ENCODE measurements at regions of chr19 and their contacts with region 1.

Region 1: DNA sequence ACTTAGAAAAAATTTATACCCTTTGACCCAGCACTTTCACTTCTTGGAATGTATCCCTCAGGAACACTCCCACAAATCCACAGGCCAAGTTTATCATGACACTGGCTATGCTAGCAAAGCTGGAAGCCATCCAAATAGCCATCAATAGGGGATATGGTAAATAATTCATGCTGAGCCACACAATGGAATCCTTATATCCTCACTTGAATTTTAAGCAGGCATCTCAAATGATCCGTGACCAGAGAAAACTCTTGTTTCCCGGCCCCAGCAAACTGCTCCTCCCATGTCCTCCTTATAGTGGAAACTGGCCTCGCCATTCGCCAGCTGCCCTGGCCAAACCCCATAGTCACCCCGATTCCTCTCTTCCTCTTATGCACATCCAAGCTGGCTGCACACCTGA is 37.6 kb downstream of the GRIK5 start:
- DNase-seq: no peak
- H3K4me3 ChIP-seq: no peak overlapping the region
- H3K27ac ChIP-seq: no peak overlapping the region
- H3K4me1 ChIP-seq: no peaks in the 10 kb centered on the region
- H3K27me3 ChIP-seq: peaks cover 3% of the 10 kb centered on the region
- CTCF ChIP-seq: no peak

Region 2: GRCh38 chr19:41872775-41873647 is 159.4 kb before region 1 on chr19:
- CTCF ChIA-PET with region 1: no interaction called
- dilution Hi-C with region 1: no loop called
- in situ Hi-C with region 1: no loop called
- intact Hi-C with region 1: loop called (anchors 10 kb)
- DNase-seq: peak; percentile 77
- H3K4me3 ChIP-seq: no peak overlapping the region
- H3K27ac ChIP-seq: no peak overlapping the region
- H3K4me1 ChIP-seq: no peaks in the 10 kb centered on the region
- H3K27me3 ChIP-seq: no peaks in the 10 kb centered on the region
- CTCF ChIP-seq: peak; percentile 79 to 83

Region 3: DNA sequence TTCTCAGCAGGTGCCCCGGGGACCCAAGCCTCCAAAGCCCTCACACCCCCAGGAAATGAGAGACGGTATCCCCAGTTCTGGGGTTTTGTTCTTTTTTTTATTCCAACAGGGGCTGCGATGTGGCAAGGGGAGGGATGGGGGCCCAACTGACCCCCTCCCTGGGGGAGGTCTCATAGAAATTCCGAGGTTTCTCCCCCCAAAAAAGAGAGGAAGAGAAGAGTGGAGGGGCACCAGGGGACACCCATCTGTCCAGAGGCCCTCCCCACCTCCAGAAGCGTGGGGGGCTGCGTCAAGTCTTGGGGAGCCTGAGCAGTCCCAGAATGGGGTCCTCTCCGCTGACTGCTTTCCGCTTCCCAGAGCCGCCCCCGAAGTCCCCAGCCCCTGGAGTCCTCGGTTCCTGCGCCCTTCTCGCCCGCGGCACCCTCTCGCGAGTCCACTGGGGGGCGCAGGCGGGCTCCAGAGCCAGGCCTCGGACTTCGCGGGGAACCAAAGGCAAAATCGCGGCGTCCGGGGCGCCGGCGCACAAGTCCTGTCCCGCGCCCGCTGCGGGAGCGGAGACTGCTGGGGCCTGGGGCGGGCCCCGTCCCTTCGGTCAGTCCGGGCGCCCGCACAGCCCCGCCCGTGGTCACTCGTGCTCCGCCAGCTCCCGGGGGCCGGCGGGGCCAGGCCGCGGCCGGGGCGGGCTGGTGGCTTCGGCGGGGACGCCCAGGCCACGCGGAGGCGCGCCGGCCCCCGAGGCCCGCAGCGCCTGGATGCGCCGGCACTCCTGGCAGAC is 34.0 kb before region 1 on chr19:
- CTCF ChIA-PET with region 1: no interaction called
- dilution Hi-C with region 1: no loop called
- in situ Hi-C with region 1: no loop called
- intact Hi-C with region 1: loop called (anchors 1 kb)
- DNase-seq: no peak
- H3K4me3 ChIP-seq: no peak overlapping the region
- H3K27ac ChIP-seq: no peak overlapping the region
- H3K4me1 ChIP-seq: peaks cover 6% of the 10 kb centered on the region
- H3K27me3 ChIP-seq: peaks cover 11% of the 10 kb centered on the region
- CTCF ChIP-seq: peak; percentile 38 to 71

Region 4: DNA sequence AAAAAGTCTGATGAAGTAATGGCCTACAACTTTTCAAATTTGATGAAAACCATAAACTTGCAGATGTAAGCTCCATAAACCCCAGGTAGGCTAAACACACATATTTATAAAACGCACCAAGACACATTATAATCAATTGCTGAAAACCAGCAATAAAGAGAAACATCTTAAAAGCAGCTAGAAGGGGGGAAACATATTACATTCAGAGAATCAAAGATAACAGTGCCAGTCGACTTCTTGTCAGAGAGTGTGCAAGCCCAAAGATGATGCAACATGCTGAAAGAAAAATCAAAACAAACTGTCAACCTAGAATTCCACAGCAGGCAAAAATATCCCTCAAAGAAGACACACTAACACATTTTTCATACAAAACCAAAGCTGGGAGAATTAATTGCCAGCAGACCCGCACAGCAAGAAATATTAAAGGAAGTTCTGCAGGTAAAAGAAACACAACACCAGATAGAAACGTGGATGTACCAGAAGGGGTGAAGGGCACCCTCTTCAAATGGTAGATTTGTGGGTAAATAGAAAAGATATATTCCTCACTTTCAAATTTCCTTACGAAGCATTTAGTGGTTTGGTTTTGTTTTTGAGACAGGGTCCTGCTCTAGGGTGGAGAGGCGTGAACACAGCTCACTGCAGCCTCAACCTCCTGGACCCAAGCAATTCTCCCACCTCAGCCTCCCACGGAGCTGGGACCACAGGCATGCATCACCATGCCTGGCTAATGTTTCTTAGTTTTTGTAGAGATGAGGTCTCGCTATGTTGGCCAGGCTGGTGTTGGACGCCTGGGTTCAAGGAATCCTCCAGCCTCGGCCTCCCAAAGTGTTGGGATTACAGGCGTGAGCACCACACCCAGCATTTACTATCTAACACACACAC is 21.9 kb before region 1 on chr19:
- CTCF ChIA-PET with region 1: interaction called, 11 read pairs
- dilution Hi-C with region 1: no loop called
- in situ Hi-C with region 1: no loop called
- intact Hi-C with region 1: no loop called
- DNase-seq: no peak
- H3K4me3 ChIP-seq: no peak overlapping the region
- H3K27ac ChIP-seq: no peak overlapping the region
- H3K4me1 ChIP-seq: no peaks in the 10 kb centered on the region
- H3K27me3 ChIP-seq: no peaks in the 10 kb centered on the region
- CTCF ChIP-seq: no peak

Region 5: DNA sequence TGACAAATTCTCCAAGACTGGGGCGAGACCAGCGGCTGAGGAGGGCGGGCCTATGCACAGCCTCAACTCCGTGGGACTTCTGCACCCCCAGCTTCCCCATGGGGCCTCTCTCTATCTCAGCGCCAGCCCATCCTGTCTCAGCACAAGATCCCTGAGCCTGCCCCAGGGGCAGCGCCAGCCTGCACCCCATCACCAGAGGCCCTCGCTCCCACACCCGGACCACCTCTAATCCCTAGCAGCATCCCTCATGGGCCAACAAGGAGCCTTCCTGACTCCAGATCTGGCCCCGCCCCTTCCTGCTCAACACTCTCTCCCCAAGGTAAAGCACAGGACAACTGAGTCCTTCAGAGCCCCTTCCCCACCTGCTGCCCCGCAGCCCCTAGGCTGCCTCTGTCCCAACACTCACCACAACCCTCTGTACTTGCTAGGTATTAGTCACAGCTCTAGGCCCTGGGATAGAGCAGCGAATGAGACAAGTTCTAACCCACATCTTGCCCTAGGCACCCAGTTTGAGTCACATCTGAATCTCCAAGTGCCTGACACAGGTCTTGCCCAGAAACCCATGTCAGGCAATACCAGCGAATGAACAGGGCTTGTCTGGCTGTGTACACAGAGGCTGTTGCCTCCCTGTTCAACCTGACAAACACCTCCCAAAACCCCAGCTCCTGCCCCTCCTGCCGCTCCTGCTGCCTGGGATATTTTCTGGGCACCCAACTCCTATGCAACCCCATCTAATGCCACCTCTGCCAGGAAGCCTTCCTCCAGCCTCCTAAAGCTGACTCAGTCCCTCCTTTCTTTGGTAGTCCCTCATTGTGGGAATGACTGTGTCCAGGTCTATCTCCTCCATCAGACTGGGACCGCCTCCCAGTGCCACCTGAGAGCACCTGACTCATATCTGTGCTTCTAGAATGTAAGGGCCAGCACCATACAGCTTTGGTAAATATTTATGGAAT is 19.0 kb after region 1 on chr19:
- CTCF ChIA-PET with region 1: interaction called, 13 read pairs
- dilution Hi-C with region 1: no loop called
- in situ Hi-C with region 1: no loop called
- intact Hi-C with region 1: no loop called
- DNase-seq: peak; percentile 99
- H3K4me3 ChIP-seq: no peak overlapping the region
- H3K27ac ChIP-seq: peak overlapping the region; percentile 69
- H3K4me1 ChIP-seq: peaks cover 38% of the 10 kb centered on the region
- H3K27me3 ChIP-seq: no peaks in the 10 kb centered on the region
- CTCF ChIP-seq: no peak

Region 6: DNA sequence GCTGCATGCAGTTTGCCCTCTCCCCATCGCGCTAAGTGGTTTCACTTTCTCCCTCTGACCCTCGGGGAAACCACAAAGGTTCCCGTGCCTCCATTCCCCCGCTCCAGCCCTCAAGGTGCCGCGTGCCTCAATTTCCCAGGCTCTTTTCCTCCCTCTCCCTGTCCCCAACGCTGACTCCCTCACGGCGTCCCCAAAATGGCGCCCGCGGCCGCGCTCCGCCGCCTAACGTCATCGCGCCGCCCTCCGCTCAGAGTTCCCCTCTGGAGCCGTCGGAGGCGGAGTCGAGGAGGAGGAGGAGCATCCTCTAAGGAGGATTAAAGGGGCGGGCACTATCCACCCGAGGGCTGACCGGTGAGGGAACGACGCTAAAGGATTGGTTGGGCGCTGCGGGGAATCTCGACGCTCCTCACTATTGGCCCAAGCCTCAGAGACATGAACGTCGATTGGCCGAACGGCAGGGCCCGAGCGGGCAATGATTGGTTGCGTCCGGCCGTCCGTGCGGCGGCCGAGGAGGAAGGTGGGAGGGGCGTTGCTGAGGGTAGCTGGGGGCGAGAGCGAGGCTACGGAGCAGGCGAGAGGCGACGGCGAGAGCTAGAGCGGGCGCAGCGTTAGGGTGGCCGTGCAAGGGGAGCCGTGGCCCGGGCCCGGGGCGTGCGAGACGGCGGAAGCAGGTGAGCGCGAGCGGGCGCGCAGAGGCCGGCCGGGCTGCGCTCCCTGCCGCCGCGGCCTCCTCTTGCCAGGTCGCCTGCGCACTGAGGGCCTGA is 43.4 kb after region 1 on chr19 and contains the start of gene ZNF574:
- CTCF ChIA-PET with region 1: interaction called, 12 read pairs
- dilution Hi-C with region 1: no loop called
- in situ Hi-C with region 1: no loop called
- intact Hi-C with region 1: loop called (anchors 2 kb)
- DNase-seq: peak; percentile 100
- H3K4me3 ChIP-seq: peak within 1 kb of the TSS; percentile 83 to 89 (median 86)
- H3K27ac ChIP-seq: peak within 1 kb of the TSS; percentile 94
- H3K4me1 ChIP-seq: peaks cover 29% of the 10 kb centered on the region
- H3K27me3 ChIP-seq: no peaks in the 10 kb centered on the region
- CTCF ChIP-seq: no peak
- total RNA-seq, gene ZNF574: 16.8 to 19.7 TPM

Measured in mammary epithelial cell (primary cell).